K562 (cell line): ENCODE measurements at regions of chr6 and their contacts with region 1.

Region 1: DNA sequence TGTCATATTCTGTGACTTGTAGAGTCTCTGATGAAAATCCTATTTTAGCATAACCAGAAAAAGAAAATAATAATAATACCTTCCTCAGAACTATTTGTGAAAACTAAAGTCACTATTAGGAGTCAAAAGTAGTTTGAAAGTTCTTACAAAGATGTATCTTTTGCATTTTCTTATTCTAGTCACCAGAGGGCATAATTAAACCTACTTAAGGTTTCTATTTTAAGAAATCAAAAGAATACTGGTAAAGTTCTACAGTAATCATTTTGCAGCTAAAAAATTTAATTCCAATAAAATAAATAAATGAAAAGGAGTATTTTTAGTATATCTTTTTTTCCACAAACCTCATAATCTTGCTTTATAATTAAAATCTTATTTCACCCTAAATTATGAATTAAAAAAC is 28.0 kb upstream of the MCM9 start:
- DNase-seq: peak in 1 of 4 experiments; percentile 13
- ATAC-seq: no peak
- H3K4me3 ChIP-seq: no peak overlapping the region
- H3K27ac ChIP-seq: no peak overlapping the region
- H3K4me1 ChIP-seq: no peaks in the 10 kb centered on the region
- H3K27me3 ChIP-seq: no peaks in the 10 kb centered on the region
- CTCF ChIP-seq: peak in 1 of 3 experiments; percentile 39; a peak in 1 of 6 replicates
- EP300 ChIP-seq: no peak
- POLR2A ChIP-seq: no peak
- RAD21 ChIP-seq: peak; percentile 42 to 54

Region 2: DNA sequence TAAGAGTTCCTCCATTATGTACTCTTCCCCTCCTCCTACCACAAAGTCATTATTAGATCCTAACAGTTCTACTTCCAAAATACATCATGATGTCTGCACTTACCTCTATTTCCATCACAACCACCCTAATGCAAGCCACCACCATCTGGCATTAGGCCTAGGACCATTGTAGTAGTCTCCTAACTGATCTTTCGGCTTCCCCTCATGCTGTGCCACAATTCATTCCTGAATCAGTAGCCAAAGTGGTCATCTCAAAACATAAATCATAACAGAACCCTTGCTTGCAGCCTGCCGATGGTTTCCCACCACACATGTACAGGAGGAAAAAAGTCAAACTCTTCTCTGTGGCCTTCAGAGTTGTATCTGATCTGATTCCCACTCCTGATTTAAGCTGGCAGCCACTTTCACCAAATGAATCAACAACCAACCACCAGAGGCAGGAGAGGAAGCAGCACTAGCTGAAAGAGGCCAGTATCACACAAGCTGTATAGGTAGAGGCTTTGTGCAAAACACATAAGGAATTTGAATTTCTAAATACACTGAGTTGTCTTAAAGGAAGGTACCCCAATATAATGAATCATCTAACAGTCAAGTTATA is 89.4 kb after region 1 on chr6:
- CTCF ChIA-PET with region 1: no interaction called
- POLR2A ChIA-PET with region 1: no interaction called
- in situ Hi-C with region 1: no loop called
- intact Hi-C with region 1: no loop called
- DNase-seq: no peak
- ATAC-seq: peak; percentile 58; the same call in 2 of the 3 replicates
- H3K4me3 ChIP-seq: no peak overlapping the region
- H3K27ac ChIP-seq: no peak overlapping the region
- H3K4me1 ChIP-seq: no peaks in the 10 kb centered on the region
- H3K27me3 ChIP-seq: no peaks in the 10 kb centered on the region
- CTCF ChIP-seq: no peak; a peak in 1 of 6 replicates
- EP300 ChIP-seq: no peak
- POLR2A ChIP-seq: no peak
- RAD21 ChIP-seq: no peak

Region 3: DNA sequence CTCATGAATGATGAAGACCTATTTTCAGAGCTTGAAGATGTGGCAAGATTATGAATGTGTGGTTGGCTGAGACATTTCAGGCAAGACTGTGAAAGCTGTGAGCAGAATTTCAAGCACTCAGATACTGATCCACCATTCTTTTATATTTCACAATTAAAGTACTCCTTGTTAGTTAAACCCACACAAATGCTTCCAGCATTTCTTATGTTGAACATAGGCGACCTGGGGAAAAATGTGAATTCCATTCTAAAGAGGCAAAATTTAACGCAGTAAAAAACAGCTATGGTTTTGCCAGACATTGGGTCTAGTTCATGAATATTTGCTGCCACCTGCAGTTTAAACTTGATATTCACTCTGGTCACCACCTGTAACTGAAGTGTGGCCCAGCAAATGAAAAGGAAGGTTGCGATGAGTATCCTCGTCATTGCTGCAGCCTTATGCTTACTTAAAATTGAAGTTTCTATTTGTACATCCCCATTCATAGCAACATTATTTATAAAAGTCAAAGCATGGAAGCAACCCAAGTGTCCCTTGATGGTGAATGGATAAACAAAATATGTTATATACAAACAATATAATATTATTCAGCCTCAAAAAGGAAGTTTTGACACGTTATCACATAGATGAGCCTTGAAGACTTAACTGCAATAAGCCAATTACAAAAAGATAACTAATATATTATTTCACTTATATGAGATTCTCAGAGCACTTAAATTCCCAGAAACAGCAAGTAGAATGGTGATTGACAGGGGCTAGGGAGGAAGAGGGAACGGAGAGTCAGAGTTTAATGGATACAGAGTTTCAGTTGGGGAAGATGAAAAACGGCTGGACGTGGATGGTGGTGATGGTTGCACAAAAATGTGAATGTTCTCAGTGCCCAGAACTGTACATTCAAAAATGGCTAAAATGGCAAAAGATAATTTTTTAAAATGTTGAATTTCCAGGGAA is 147.9 kb after region 1 on chr6:
- CTCF ChIA-PET with region 1: interaction called, 48 read pairs
- POLR2A ChIA-PET with region 1: interaction called, 7 read pairs
- in situ Hi-C with region 1: loop called (anchors 5 kb)
- intact Hi-C with region 1: loop called (anchors 1 kb)
- DNase-seq: peak; percentile 58 to 79 (median 64)
- ATAC-seq: peak; percentile 92
- H3K4me3 ChIP-seq: no peak overlapping the region
- H3K27ac ChIP-seq: no peak overlapping the region
- H3K4me1 ChIP-seq: peaks cover 3 to 16% of the 10 kb centered on the region in 2 experiments; a peak in 3 of 5 replicates
- H3K27me3 ChIP-seq: no peaks in the 10 kb centered on the region
- CTCF ChIP-seq: peak; percentile 68 to 86 (median 72)
- EP300 ChIP-seq: no peak
- POLR2A ChIP-seq: no peak
- RAD21 ChIP-seq: peak; percentile 97 to 98

Region 4: DNA sequence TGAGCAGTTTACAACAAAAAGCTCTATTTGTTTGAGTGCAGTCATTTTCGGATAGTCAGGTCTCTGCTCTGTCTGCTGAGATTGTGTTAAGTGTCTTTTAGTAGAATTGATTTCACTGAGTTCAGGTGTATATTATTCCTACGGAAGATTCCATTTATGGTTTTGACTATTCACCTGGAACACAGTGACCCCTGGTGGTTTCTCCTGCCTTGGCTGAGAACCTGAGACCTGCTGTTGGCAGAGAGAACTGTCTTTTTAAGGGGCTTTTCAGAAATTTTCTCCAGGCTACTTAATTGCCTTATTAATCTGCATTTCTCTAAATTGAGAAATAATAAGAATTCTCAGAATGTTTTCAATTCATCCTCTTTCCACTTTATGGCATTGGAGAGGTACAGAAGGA is 1863.2 kb after region 1 on chr6:
- CTCF ChIA-PET with region 1: no interaction called
- POLR2A ChIA-PET with region 1: no interaction called
- in situ Hi-C with region 1: no loop called
- intact Hi-C with region 1: loop called (anchors 5 kb)
- DNase-seq: peak in 2 of 4 experiments; percentile 9 to 27
- ATAC-seq: 0 out of 3 replicates have a peak, but pooled peaks have one; percentile 57
- H3K4me3 ChIP-seq: no peak overlapping the region
- H3K27ac ChIP-seq: no peak overlapping the region
- H3K4me1 ChIP-seq: no peaks in the 10 kb centered on the region
- H3K27me3 ChIP-seq: no peaks in the 10 kb centered on the region
- CTCF ChIP-seq: peak in 2 of 3 experiments; percentile 43 to 45; a peak in 2 of 6 replicates
- EP300 ChIP-seq: no peak
- POLR2A ChIP-seq: no peak
- RAD21 ChIP-seq: peak in 1 of 2 experiments; percentile 51; a peak in 2 of 4 replicates